Tibial artery (tissue), 4 donors: ENCODE measurements at regions of chr1 and their contacts with region 1.

Region 1: DNA sequence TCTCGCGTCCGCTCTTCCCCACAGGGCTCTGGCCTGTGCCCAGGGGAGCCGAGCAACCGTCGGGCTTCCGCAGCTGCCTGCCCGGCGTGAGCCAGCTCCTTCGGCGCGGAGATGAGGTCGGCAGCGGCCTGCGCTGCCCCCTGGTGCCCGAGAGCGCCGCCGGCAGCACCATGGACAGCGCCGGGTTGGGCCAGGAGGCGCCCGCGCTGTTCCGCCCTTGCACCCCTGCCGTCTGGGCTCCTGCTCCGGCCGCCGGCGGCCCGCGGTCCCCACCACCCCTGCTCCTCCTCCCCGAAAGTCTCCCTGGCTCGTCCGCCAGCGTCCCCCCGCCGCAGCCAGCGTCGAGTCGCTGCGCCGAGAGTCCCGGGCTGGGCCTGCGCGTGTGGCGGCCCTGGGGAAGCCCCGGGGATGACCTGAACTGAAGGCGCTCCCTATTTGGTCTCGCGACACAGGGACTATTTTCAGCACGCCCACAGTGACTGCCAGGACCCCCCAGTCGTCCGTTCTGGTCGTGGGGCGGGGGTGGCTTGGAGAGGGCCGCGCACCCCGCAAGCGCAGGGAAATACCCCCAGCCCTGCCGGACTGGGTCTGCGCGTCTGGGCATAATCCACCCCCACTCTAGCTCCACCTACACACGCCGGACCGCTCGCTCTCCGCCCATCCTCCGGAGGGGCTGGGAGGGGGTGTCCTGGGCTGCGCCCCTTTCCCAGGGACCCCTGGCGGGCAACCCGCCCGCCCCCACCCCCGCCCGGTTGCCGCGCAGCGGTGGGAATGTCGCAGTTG is 1.3 kb downstream of the HES3 start:
- DNase-seq: peak; percentile 60 to 80
- H3K4me3 ChIP-seq: no peak overlapping the region
- H3K27ac ChIP-seq: no peak overlapping the region
- H3K4me1 ChIP-seq: peaks cover 0 to 42% (median 23%) of the 10 kb centered on the region in 4 donors
- H3K27me3 ChIP-seq: peaks cover 15 to 95% of the 10 kb centered on the region in 2 donors
- CTCF ChIP-seq: peak; percentile 78 to 87

Region 2: DNA sequence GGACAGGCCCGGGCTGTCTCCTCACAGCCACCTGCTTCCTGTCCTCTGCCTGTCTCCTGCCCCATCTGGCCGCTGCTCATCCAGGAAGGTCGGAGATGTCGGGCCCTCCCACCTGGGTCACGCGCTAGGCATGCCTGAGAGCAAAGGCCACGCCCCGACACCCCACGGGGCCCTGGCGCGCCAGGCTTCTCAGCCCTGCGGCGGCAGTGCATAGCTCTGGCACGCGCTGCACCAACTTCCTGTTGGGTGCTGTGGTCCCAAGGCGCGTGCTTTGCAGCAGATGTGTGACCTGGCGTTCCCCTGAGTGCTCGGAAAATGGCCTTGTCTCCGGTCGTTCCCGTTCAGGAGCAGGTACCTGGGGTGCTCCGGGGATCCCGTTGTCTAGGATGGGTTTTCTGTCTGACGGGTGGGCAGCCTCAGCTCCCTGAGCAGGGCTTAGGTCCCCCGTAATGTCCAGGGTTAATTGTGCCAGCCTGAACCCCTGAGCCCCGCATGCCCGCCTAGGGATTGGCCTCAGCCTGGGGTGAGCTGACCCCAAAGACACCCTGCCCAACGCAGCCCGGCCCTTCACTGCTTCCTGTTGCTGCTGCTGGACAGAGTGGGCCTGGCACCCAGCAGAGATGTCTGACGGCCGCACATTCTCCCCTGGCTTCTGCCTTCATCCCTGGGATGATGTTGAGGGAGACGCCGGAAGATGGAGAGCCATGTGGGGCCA is 219.0 kb before region 1 on chr1:
- intact Hi-C with region 1: no loop called
- DNase-seq: peak; percentile 76 to 81
- H3K4me3 ChIP-seq: peak overlapping the region; percentile 22 to 30
- H3K27ac ChIP-seq: no peak overlapping the region
- H3K4me1 ChIP-seq: peaks cover 0 to 8% (median 0%) of the 10 kb centered on the region in 4 donors
- H3K27me3 ChIP-seq: peaks cover 0 to 43% of the 10 kb centered on the region in 2 donors
- CTCF ChIP-seq: no peak

Region 3: GRCh38 chr1:6059866-6060265 is 185.4 kb before region 1 on chr1:
- intact Hi-C with region 1: loop called (anchors 5 kb)
- DNase-seq: no peak
- H3K4me3 ChIP-seq: no peak overlapping the region
- H3K27ac ChIP-seq: no peak overlapping the region
- H3K4me1 ChIP-seq: no peaks in the 10 kb centered on the region
- H3K27me3 ChIP-seq: peaks cover 0 to 43% of the 10 kb centered on the region in 2 donors
- CTCF ChIP-seq: no peak

Region 4: DNA sequence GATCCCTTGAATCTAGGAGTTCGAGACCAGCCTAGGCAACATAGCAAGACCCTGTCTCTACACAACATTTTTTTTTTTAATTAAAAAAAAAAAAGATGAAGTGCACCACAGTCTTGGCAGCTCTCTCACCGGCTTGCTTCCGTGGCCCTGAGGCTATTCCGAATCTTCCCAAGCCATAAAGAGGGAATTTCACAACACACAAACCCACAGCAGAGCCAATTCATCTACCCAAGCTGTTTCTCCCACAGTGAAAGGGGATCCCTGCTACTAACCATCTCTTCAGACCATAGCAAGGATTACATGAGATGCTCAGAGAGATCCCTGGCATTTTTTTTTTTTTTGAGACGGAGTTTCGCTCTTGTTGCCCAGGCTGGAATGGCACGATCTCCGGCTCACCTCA is 56.8 kb before region 1 on chr1:
- intact Hi-C with region 1: no loop called
- DNase-seq: no peak
- H3K4me3 ChIP-seq: no peak overlapping the region
- H3K27ac ChIP-seq: no peak overlapping the region
- H3K4me1 ChIP-seq: peaks cover 0 to 6% (median 0%) of the 10 kb centered on the region in 4 donors
- H3K27me3 ChIP-seq: no peaks in the 10 kb centered on the region
- CTCF ChIP-seq: no peak

Region 5: DNA sequence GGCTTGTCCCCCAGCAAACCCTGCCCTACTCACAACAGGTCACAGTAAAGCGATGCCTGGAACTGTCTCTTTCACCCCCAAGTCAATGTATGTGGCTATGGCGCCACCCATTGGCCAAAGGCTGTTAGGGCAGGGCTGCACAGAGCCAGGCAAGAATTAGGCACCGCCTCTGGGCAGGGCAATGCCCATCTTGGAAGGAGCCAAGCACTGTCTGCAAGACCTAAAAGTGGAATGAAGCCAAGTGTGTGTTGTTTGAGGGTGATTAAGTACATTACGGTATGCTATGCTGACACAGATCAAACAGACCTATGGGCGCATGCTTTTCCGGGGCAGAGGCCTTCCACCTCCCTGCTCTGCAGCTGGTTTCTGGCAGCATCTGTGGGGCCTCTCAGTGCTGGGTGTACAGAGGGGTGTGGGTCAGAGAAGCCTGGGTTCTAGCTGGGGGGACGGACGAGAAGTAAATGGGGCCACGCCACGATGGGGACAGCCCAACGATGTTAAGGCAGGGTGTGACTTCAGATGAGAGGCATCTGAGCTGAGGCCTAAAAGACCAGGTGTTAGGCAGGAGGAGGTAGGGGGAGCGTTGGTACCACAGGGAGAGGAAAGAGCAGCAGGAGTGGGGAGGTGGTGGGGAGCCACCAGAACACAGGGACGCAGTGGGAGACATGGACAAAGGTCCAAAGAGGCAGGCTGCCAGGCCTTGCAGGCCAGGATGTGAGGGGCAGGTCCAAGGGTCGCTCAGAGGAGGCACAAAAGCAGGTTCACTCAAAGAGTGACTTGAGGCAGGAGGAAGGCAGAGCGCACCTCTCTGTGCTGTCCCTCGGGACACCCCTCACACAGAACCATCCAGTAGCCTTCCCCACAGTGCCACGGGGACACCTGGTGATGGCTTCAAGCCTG is 98.5 kb after region 1 on chr1:
- intact Hi-C with region 1: loop called (anchors 5 kb)
- DNase-seq: peak in 1 of 2 donors; percentile 58
- H3K4me3 ChIP-seq: no peak overlapping the region
- H3K27ac ChIP-seq: no peak overlapping the region
- H3K4me1 ChIP-seq: peaks cover 0 to 8% (median 0%) of the 10 kb centered on the region in 4 donors
- H3K27me3 ChIP-seq: no peaks in the 10 kb centered on the region
- CTCF ChIP-seq: peak; percentile 65

Region 6: GRCh38 chr1:6359216-6360116 is 114.2 kb after region 1 on chr1:
- intact Hi-C with region 1: no loop called
- DNase-seq: peak; percentile 67 to 78
- H3K4me3 ChIP-seq: peak overlapping the region in 1 of 2 donors; percentile 17
- H3K27ac ChIP-seq: peak overlapping the region; percentile 53 to 70
- H3K4me1 ChIP-seq: peaks cover 0 to 26% (median 20%) of the 10 kb centered on the region in 4 donors
- H3K27me3 ChIP-seq: no peaks in the 10 kb centered on the region
- CTCF ChIP-seq: no peak

Region 7: DNA sequence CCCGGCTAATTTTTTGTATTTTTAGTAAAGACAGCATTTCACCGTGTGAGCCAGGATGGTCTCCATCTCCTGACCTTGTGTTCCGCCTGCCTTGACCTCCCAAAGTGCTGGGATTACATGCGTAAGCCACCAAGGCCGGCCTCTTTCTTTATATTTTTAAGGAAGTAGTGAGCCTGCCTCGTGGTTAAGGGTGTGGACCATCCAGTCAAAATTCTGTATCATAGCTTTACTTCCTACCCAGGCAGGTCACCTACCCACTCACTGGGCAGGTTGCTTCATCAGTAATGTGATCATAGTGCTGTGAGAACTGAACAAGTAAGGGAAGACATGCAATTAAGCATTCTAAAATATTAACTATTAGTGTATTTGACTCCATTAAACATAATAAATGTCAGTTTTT is 156.4 kb after region 1 on chr1:
- intact Hi-C with region 1: loop called (anchors 2 kb)
- DNase-seq: no peak
- H3K4me3 ChIP-seq: no peak overlapping the region
- H3K27ac ChIP-seq: no peak overlapping the region
- H3K4me1 ChIP-seq: no peaks in the 10 kb centered on the region
- H3K27me3 ChIP-seq: peaks cover 0 to 29% of the 10 kb centered on the region in 2 donors
- CTCF ChIP-seq: no peak